ENCODE measurements at regions of chr15 and their contacts with region 1.

Region 1: GRCh38 chr15:96428742-96429141 is 98.2 kb downstream of the NR2F2 start:
- DNase-seq: peak; percentile 89
- H3K4me3 ChIP-seq: no peak overlapping the region
- H3K27me3 ChIP-seq: peaks cover 4% of the 10 kb centered on the region
- CTCF ChIP-seq: no peak

Region 2: GRCh38 chr15:96264801-96265515 is 163.8 kb before region 1 on chr15:
- CTCF ChIA-PET with region 1: no interaction called
- POLR2A ChIA-PET with region 1: interaction called, 10 read pairs
- DNase-seq: no peak
- H3K4me3 ChIP-seq: no peak overlapping the region
- H3K27me3 ChIP-seq: no peaks in the 10 kb centered on the region
- CTCF ChIP-seq: no peak

Region 3: DNA sequence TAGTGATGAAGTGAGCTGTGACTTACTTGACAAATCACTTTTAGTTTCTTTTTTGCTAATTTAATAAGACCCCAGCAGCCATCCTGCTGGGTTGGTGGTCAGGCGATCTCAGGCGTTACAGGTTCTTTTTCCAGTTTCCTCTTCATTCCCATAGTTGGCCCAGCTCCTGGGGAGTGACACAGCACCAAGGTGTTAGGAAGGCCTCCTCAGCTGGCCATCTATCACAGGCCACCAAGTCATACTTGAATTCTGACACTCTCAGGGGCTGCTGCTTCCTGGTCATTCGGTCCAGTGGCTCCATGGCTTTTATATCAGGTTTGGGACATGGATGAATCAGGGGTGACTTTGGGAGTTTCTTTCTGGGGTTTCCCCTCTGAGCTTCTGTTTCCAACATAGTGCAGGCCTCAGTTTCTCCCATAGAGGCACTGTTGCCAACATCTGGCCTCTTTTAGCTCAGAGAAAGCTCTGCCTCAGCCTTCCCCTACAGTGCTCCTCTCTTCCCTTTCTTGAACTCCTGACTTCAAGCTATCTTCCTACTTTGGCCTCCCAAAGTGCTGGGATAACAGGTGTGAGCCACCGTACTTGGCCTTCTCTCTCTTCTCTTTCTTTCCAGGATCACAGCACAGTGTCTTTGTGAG is 113.5 kb after region 1 on chr15:
- CTCF ChIA-PET with region 1: no interaction called
- POLR2A ChIA-PET with region 1: no interaction called
- DNase-seq: no peak
- H3K4me3 ChIP-seq: no peak overlapping the region
- H3K27me3 ChIP-seq: no peaks in the 10 kb centered on the region
- CTCF ChIP-seq: no peak

Measured in BJ (cell line).